ENCODE measurements at regions of chr7 and their contacts with region 1.

Region 1: GRCh38 chr7:135771961-135772638 is 23.5 kb upstream of the FAM180A start:
- DNase-seq: peak; percentile 21 to 76
- H3K4me3 ChIP-seq: no peak overlapping the region
- H3K27ac ChIP-seq: peak overlapping the region; percentile 77
- H3K4me1 ChIP-seq: peaks cover 36% of the 10 kb centered on the region
- H3K27me3 ChIP-seq: no peaks in the 10 kb centered on the region
- CTCF ChIP-seq: no peak

Region 2: GRCh38 chr7:135519233-135519688 is 252.8 kb before region 1 on chr7:
- CTCF ChIA-PET with region 1: no interaction called
- POLR2A ChIA-PET with region 1: interaction called, 18 read pairs
- intact Hi-C with region 1: no loop called
- DNase-seq: no peak
- H3K4me3 ChIP-seq: no peak overlapping the region
- H3K27ac ChIP-seq: no peak overlapping the region
- H3K4me1 ChIP-seq: no peaks in the 10 kb centered on the region
- H3K27me3 ChIP-seq: no peaks in the 10 kb centered on the region
- CTCF ChIP-seq: no peak

Region 3: DNA sequence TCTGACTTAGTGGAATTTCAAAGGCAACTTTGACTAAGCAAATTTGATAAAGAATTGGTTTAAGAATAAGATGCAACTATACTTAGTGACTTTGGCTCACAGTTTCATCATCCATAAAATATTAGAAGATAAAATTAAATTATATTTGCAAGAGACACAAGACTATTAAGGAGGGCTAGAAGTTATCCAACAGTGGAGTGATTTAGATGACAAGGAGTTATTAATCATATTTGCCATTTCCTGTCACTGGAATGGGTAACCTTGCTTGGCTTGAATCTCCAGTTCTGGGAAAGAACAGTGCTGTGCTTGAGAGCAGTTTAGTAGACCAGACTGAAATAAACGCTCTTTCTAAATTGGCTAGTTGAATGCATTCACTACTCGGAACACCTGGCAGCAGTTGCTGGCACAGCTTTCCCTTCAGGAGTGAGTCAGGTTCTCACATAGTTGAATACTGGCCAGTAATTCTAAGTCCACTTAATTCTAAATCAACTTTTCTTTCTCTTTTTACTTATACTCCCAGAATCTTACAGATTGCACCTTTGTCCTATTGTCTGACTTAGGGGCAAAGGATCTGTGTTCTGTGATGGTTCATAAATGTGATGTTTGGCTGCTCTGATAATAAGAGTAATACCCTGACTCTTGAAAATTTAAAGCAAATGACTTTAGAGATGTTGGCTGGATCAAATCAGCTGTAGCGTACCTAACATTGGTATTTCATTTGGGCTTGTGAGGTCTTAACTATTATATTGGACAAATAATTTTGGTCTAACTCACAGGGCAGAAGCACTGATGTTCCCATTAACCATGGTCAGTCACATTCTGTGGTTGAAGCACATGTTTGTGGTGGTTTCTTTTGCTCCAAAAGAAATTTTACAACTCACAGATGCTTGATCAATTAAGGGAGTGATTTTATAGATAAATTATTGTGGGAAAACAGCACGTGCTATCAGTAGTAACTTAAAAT is 93.2 kb before region 1 on chr7:
- CTCF ChIA-PET with region 1: interaction called, 4 read pairs
- POLR2A ChIA-PET with region 1: no interaction called
- intact Hi-C with region 1: loop called (anchors 1 kb)
- DNase-seq: peak; percentile 65 to 88
- H3K4me3 ChIP-seq: no peak overlapping the region
- H3K27ac ChIP-seq: peak overlapping the region; percentile 51
- H3K4me1 ChIP-seq: peaks cover 25% of the 10 kb centered on the region
- H3K27me3 ChIP-seq: no peaks in the 10 kb centered on the region
- CTCF ChIP-seq: no peak

Region 4: GRCh38 chr7:135710417-135711138 is 61.5 kb before region 1 on chr7:
- CTCF ChIA-PET with region 1: no interaction called
- POLR2A ChIA-PET with region 1: no interaction called
- intact Hi-C with region 1: loop called (anchors 5 kb)
- DNase-seq: no peak
- H3K4me3 ChIP-seq: no peak overlapping the region
- H3K27ac ChIP-seq: no peak overlapping the region
- H3K4me1 ChIP-seq: peaks cover 51% of the 10 kb centered on the region
- H3K27me3 ChIP-seq: no peaks in the 10 kb centered on the region
- CTCF ChIP-seq: peak; percentile 74

Region 5: GRCh38 chr7:135745703-135746312 is 26.3 kb before region 1 on chr7:
- CTCF ChIA-PET with region 1: no interaction called
- POLR2A ChIA-PET with region 1: no interaction called
- intact Hi-C with region 1: loop called (anchors 1 kb)
- DNase-seq: peak; percentile 77 to 96
- H3K4me3 ChIP-seq: peak overlapping the region; percentile 20; the same call in 1 of the 2 replicates
- H3K27ac ChIP-seq: peak overlapping the region; percentile 98
- H3K4me1 ChIP-seq: peaks cover 38% of the 10 kb centered on the region
- H3K27me3 ChIP-seq: no peaks in the 10 kb centered on the region
- CTCF ChIP-seq: no peak

Measured in PC-9 (cell line).